ENCODE measurements at regions of chr18 and their contacts with region 1.

Region 1: GRCh38 chr18:10242936-10243680 is 211.3 kb upstream of the APCDD1 start:
- DNase-seq: no peak
- ATAC-seq: no peak
- H3K4me3 ChIP-seq: no peak overlapping the region
- H3K27ac ChIP-seq: no peak overlapping the region
- H3K4me1 ChIP-seq: peaks cover 0 to 58% (median 26%) of the 10 kb centered on the region in 9 donors
- H3K27me3 ChIP-seq: peaks cover 0 to 4% (median 0%) of the 10 kb centered on the region in 7 donors
- CTCF ChIP-seq: no peak

Region 2: GRCh38 chr18:10015941-10016819 is 226.9 kb before region 1 on chr18:
- intact Hi-C with region 1: loop called in 1 of 10 experiments (anchors 5 kb)
- DNase-seq: peak in 1 of 2 donors; percentile 56
- ATAC-seq: peak; percentile 70 to 88 (median 84)
- H3K4me3 ChIP-seq: no peak overlapping the region
- H3K27ac ChIP-seq: peak overlapping the region; percentile 56 to 87 (median 70)
- H3K4me1 ChIP-seq: peaks cover 4 to 54% (median 42%) of the 10 kb centered on the region in 9 donors
- H3K27me3 ChIP-seq: no peaks in the 10 kb centered on the region
- CTCF ChIP-seq: peak in 7 of 9 donors; percentile 7 to 64 (median 47)

Region 3: DNA sequence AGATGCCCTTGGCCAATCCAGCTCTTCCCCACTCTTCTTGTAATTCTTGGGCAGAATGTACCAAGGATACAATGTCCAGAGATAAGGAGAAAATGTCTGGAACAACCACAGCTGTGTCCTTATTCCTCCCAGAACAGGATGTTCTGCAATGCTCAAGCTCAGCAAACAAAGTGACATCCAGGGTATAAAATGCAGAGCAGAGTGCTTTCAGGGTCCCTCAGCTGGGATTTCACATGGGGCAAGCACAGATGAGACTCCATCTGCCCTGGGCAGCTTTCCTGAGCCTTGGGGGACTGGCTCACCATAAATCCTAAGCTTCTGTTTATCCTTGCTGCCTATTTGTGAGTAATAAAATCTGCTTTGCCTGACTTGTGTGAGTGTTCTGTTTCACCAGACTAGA is 201.9 kb before region 1 on chr18:
- intact Hi-C with region 1: loop called in 1 of 10 experiments (anchors 10 kb)
- DNase-seq: peak in 1 of 2 donors; percentile 37
- ATAC-seq: peak in 7 of 8 donors; percentile 70 to 88 (median 87)
- H3K4me3 ChIP-seq: no peak overlapping the region
- H3K27ac ChIP-seq: peak overlapping the region in 9 of 10 donors; percentile 15 to 80 (median 61)
- H3K4me1 ChIP-seq: peaks cover 0 to 21% (median 4%) of the 10 kb centered on the region in 9 donors
- H3K27me3 ChIP-seq: no peaks in the 10 kb centered on the region
- CTCF ChIP-seq: no peak

Region 4: GRCh38 chr18:10051877-10052631 is 191.1 kb before region 1 on chr18:
- intact Hi-C with region 1: loop called in 2 of 10 experiments (anchors 5 to 10 kb)
- DNase-seq: peak in 1 of 2 donors; percentile 63
- ATAC-seq: peak; percentile 59 to 88 (median 78)
- H3K4me3 ChIP-seq: no peak overlapping the region
- H3K27ac ChIP-seq: peak overlapping the region; percentile 34 to 76 (median 60)
- H3K4me1 ChIP-seq: peaks cover 0 to 30% (median 19%) of the 10 kb centered on the region in 9 donors
- H3K27me3 ChIP-seq: no peaks in the 10 kb centered on the region
- CTCF ChIP-seq: no peak

Region 5: DNA sequence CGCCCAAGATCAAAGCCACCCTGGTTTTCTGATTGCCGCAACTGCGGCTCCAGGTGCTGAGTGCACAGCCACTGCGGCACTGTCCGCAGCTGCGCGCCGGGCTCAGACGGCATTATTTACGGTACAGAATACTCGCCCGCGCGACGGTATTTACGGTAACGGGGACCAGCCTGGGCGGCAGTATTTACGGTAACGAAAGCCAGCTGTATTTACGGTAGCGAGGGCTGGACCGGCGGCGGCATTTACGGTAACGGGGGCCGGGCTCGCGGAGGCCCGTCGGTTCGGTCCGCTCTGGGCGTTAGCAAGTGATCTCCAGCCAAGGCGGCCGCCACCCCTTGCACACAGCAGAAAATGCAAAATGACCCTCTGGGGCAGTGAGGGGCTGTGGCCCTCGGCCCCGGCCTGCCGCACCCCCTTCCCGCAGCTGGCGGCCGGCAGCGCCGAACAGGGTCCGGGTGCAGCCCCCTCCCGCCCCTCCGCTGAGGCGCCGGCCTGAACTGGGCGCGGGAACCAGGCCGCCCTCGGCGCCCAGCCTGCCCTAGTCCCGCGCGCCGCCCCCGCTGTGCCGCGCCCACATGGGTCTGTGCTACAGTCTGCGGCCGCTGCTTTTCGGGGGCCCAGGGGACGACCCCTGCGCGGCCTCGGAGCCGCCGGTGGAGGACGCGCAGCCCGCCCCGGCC is 1446.0 kb after region 1 on chr18 and contains the start of gene GNAL:
- intact Hi-C with region 1: no loop called
- DNase-seq: peak; percentile 75 to 77
- ATAC-seq: peak; percentile 92 to 98 (median 94)
- H3K4me3 ChIP-seq: peak within 1 kb of the TSS in 9 of 10 donors; percentile 43 to 74 (median 63)
- H3K27ac ChIP-seq: peak within 1 kb of the TSS in 5 of 10 donors; percentile 10 to 55 (median 25)
- H3K4me1 ChIP-seq: peaks cover 0 to 13% (median 7%) of the 10 kb centered on the region in 9 donors
- H3K27me3 ChIP-seq: peaks cover 7 to 69% (median 49%) of the 10 kb centered on the region in 7 donors
- CTCF ChIP-seq: no peak
- total RNA-seq, gene GNAL: 1.1 to 6.9 (median 1.8) TPM